ENCODE measurements at regions of chr10 and their contacts with region 1.

Region 1: DNA sequence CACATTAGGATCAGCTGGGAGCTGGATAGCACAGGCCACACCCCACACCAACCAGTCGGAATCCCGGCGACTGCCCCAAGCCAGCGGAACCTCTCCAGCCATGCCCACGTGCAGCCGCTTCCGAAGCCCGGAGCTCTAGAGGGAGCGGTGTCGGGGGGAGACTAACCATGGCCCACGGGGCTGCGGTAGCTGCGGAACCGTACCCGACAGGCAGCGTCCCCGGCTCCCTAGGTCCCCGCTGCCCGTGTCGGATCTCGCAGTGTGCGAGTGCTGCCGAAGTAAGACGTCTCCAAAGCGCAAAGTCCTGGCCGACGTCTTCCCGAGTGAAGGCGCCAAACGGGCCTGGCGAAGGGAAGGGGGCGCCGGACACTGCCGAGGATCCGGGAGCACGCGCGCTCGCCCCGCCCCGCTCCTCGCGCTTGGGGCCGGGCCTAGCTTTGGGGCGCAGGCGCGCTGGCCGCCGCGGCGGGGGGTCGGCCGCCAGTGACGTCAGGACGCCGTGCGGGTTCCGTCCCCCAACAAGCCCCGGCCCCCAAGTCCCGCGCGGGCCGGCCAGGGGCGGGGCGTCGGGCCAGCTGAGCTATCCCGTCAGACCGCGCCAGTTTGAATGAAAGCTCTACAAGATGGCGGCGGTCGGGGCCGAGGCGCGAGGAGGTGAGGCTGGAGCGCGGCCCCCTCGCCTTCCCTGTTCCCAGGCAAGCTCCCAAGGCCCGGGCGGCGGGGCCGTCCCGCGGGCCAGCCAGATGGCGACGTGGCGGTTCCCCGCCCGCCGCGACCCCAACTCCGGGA is at the start of gene SUV39H2:
- DNase-seq: peak; percentile 96 to 98 (median 96)
- ATAC-seq: peak; percentile 90
- H3K4me3 ChIP-seq: peak within 1 kb of the TSS; percentile 96
- H3K27ac ChIP-seq: peak within 1 kb of the TSS; percentile 85
- H3K4me1 ChIP-seq: peaks cover 12 to 13% of the 10 kb centered on the region in 2 experiments
- H3K27me3 ChIP-seq: no peaks in the 10 kb centered on the region
- CTCF ChIP-seq: peak in 1 of 3 experiments; percentile 5; a peak in 1 of 6 replicates
- EP300 ChIP-seq: no peak
- POLR2A ChIP-seq: peak; percentile 93
- RAD21 ChIP-seq: no peak
- polyA plus RNA-seq, gene SUV39H2: 41.7 to 45.7 TPM

Region 2: DNA sequence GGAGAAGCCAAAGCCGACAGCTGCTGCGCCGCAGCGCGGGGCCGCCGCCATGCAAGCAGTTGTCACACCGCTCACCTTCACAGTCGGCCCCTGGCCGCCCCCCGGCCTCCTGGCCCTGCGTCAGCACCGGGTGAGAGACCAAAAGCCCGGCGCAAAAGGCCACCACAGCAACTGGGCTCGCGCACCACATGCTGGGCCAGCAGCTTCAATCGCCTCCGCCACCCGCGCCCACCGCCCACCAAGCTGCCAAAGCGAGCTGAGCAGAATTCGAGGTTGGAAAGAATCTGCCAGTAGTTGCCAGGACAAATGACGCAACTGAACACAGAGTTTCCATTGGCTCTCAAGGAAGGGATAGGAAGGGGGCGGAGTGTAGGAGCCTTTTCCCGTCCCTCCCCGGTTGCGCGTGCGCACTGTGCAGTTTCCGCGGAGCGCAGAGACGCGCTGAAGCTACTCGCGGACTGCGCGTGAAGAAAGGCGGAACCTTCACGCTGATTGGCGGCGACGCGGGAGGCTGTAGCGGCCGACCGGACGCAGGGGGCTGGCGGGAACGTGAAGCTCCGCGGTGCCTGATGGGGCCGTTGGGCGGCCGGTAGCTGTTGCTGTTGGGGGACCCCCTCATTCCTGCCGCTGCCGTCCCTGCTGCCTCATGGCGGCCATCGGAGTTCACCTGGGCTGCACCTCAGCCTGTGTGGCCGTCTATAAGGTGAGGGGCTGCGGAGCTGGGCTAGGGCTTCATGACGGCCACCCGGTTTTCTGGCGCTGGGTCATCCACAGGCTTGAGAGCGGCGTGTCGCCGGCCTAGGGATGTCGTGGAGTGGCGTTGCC is 40.5 kb before region 1 on chr10 and contains the starts of genes CDNF, HSPA14 and MSANTD7:
- CTCF ChIA-PET with region 1: interaction called, 3 read pairs
- POLR2A ChIA-PET with region 1: interaction called, 17 read pairs
- in situ Hi-C with region 1: no loop called
- intact Hi-C with region 1: loop called (anchors 5 kb)
- DNase-seq: peak; percentile 94 to 99 (median 96)
- ATAC-seq: peak; percentile 97
- H3K4me3 ChIP-seq: peak within 1 kb of the TSS; percentile 99
- H3K27ac ChIP-seq: peak within 1 kb of the TSS; percentile 96
- H3K4me1 ChIP-seq: peaks cover 3 to 13% of the 10 kb centered on the region in 2 experiments; a peak in 2 of 5 replicates
- H3K27me3 ChIP-seq: no peaks in the 10 kb centered on the region
- CTCF ChIP-seq: no peak
- EP300 ChIP-seq: no peak
- POLR2A ChIP-seq: peak; percentile 96
- RAD21 ChIP-seq: no peak
- polyA plus RNA-seq, gene CDNF: 0.18 to 0.37 TPM
- polyA plus RNA-seq, gene HSPA14: 70.1 to 75.0 TPM
- polyA plus RNA-seq, gene MSANTD7: 5.2 to 7.1 TPM

Region 3: DNA sequence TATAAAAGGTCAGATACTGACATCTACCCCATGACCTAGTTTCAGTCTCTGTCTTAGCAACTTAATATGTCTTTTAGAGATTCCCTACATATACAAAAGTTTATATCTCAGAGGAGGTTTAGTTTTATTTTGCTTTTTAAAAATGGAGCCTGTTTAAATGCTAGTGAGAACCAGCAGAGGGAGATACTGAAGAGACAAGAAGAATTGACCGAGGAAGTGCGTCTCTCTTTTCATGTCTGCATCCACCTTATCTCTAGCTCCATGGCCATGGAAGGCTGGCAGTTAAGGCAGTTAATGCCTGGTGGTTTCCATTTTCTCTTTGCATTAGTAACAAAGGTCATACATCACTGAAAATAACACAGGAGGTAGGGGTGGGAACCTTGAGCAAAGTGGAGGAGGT is 10.9 kb after region 1 on chr10:
- CTCF ChIA-PET with region 1: no interaction called
- POLR2A ChIA-PET with region 1: interaction called, 14 read pairs
- in situ Hi-C with region 1: no loop called
- intact Hi-C with region 1: no loop called
- DNase-seq: peak; percentile 49 to 83 (median 64)
- ATAC-seq: peak; percentile 95
- H3K4me3 ChIP-seq: no peak overlapping the region
- H3K27ac ChIP-seq: peak overlapping the region; percentile 68; the same call in 2 of the 3 replicates
- H3K4me1 ChIP-seq: peaks cover 0 to 7% of the 10 kb centered on the region in 2 experiments; a peak in 2 of 5 replicates
- H3K27me3 ChIP-seq: no peaks in the 10 kb centered on the region
- CTCF ChIP-seq: peak; percentile 40 to 72 (median 61); a peak in 5 of 6 replicates
- EP300 ChIP-seq: peak; percentile 70; the same call in 1 of the 2 replicates
- POLR2A ChIP-seq: no peak
- RAD21 ChIP-seq: peak; percentile 52 to 57

Region 4: GRCh38 chr10:14954001-14954770 is 75.7 kb after region 1 on chr10 and contains the start of gene DCLRE1C:
- CTCF ChIA-PET with region 1: interaction called, 3 read pairs
- POLR2A ChIA-PET with region 1: interaction called, 3 read pairs
- in situ Hi-C with region 1: no loop called
- intact Hi-C with region 1: loop called (anchors 5 kb)
- DNase-seq: peak; percentile 94 to 95 (median 94)
- ATAC-seq: peak; percentile 98
- H3K4me3 ChIP-seq: peak within 1 kb of the TSS; percentile 74
- H3K27ac ChIP-seq: peak within 1 kb of the TSS; percentile 74
- H3K4me1 ChIP-seq: peaks cover 15 to 21% of the 10 kb centered on the region in 2 experiments; a peak in 4 of 5 replicates
- H3K27me3 ChIP-seq: no peaks in the 10 kb centered on the region
- CTCF ChIP-seq: no peak
- EP300 ChIP-seq: no peak
- POLR2A ChIP-seq: peak; percentile 97
- RAD21 ChIP-seq: no peak
- polyA plus RNA-seq, gene DCLRE1C: 15.6 to 22.0 TPM

Measured in K562 (cell line).